Heart right ventricle (tissue), 16 donors: ENCODE measurements at regions of chr2 and their contacts with region 1.

Region 1: DNA sequence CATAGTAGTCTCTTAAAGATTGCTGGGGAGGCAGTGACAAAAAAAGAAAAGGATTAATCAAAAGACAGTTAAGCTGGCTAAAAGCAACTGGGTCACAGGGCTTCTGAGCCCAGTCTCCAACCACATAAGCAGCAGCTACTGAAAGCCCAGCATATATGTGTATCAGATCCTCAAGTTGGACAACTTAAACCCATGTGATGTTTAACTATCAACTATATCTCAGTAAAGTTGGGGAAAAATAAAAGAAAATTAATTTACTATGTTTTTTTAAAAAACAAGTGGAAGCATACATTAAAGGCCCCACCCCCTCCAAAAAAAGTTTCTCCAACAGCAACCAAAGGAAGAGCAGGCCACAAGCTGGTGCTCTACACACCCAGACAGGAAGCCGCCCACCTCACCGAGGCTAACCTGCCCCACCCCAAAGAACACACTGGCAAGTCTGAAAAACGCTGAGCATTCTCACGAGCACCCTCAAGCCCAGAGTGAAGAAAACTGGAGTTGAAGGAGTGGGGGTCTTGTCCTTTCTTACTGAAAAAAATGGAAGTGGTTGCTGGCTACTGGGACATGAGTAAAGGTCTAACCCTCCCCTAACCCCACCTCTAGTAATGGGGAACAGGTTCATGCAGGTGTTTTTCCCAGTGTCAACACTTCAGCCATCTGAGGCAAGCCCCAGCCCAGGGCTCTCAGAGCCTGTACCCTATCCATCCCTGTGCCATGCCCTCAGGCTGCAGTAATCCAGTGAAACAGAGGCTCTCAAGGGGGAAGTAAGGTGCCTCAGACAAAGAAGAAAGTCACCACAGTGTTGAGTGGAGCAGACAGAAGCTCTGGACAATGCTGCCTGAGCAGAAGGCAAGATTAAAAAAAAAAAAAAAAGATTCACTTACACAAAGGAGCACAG is 106.3 kb downstream of the GYPC start:
- DNase-seq: no peak
- ATAC-seq: no peak
- H3K4me3 ChIP-seq: no peak overlapping the region
- H3K27ac ChIP-seq: peak overlapping the region in 1 of 10 donors; percentile 64
- H3K4me1 ChIP-seq: no peaks in the 10 kb centered on the region
- H3K27me3 ChIP-seq: no peaks in the 10 kb centered on the region
- CTCF ChIP-seq: no peak

Region 2: GRCh38 chr2:126644630-126645191 is 117.5 kb before region 1 on chr2:
- intact Hi-C with region 1: loop called in 1 of 10 experiments (anchors 10 kb)
- DNase-seq: no peak
- ATAC-seq: peak in 2 of 8 donors; percentile 35 to 45
- H3K4me3 ChIP-seq: no peak overlapping the region
- H3K27ac ChIP-seq: no peak overlapping the region
- H3K4me1 ChIP-seq: no peaks in the 10 kb centered on the region
- H3K27me3 ChIP-seq: no peaks in the 10 kb centered on the region
- CTCF ChIP-seq: no peak

Region 3: GRCh38 chr2:126921066-126921465 is 158.8 kb after region 1 on chr2:
- intact Hi-C with region 1: no loop called
- DNase-seq: no peak
- ATAC-seq: no peak
- H3K4me3 ChIP-seq: no peak overlapping the region
- H3K27ac ChIP-seq: no peak overlapping the region
- H3K4me1 ChIP-seq: no peaks in the 10 kb centered on the region
- H3K27me3 ChIP-seq: no peaks in the 10 kb centered on the region
- CTCF ChIP-seq: no peak